ENCODE measurements at regions of chr12 and their contacts with region 1.

Region 1: DNA sequence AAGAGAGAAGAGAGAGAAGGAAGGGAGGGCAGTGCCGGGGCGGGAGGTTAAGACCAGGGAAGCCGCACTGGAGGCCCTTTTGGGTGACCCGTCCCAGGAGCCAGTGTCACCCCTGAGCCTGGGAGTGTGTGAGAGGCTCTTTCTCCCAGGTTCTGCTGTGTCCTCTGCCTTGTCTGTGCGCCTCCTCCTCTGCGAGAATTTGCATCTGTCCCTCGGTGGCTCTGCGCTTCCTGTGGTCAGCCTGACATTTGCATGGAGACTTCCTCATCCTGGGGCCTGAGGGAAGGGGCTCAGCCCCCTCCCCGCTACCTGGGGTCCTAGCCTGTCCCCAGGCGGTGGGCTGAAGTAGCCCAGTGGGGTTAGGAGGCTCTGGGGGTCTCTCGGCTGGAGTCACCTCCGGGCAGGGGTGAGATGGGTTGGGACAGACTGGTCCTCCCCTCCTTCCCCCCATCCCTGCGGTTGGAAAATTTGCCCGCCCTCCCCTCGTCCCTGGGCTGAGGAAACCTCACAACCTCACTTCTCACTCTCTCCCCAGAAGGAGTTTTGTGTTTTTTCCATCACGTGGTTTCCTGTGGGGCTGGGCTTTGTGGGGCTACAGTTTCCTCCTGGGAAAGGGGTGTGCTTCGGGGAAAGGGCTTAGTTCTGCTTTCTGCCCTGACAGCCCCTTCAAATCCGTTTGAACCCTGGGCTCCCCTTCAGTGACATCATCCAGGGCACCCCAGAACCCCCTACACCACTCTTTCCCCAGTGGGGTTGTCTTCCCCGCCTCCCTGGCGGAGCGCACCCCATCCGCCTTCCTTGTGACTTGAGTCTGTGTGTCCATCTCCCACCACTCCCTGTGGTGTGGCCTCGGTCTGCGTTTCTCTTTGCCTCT is 2.5 kb downstream of the PTPN6 start:
- DNase-seq: peak in 8 of 9 donors; percentile 65 to 92 (median 74)
- ATAC-seq: peak; percentile 56
- H3K4me3 ChIP-seq: peak overlapping the region; percentile 92
- H3K4me3 Mint-ChIP-seq: peak overlapping the region; percentile 93 to 100 (median 98)
- H3K27ac ChIP-seq: peak overlapping the region; percentile 95
- H3K27ac Mint-ChIP-seq: peak overlapping the region; percentile 83 to 100 (median 97)
- H3K4me1 ChIP-seq: peaks cover 70 to 84% of the 10 kb centered on the region in 2 donors
- H3K4me1 Mint-ChIP-seq: peaks cover 54 to 85% (median 72%) of the 10 kb centered on the region in 7 donors
- H3K27me3 ChIP-seq: no peaks in the 10 kb centered on the region
- H3K27me3 Mint-ChIP-seq: no peaks in the 10 kb centered on the region

Region 2: GRCh38 chr12:6914246-6914946 is 39.3 kb before region 1 on chr12 and contains the start of gene ENO2:
- CTCF ChIA-PET with region 1: no interaction called
- POLR2A ChIA-PET with region 1: interaction called, 367 read pairs
- intact Hi-C with region 1: loop called in 1 of 2 experiments (anchors 5 kb)
- DNase-seq: peak; percentile 68 to 90 (median 81)
- ATAC-seq: peak; percentile 96
- H3K4me3 ChIP-seq: peak within 1 kb of the TSS; percentile 79
- H3K4me3 Mint-ChIP-seq: peak within 1 kb of the TSS; percentile 88 to 100 (median 96)
- H3K27ac ChIP-seq: peak within 1 kb of the TSS; percentile 86
- H3K27ac Mint-ChIP-seq: peak within 1 kb of the TSS; percentile 86 to 99 (median 93)
- H3K4me1 ChIP-seq: peaks cover 11 to 14% of the 10 kb centered on the region in 2 donors
- H3K4me1 Mint-ChIP-seq: peaks cover 0 to 53% (median 36%) of the 10 kb centered on the region in 7 donors
- H3K27me3 ChIP-seq: no peaks in the 10 kb centered on the region
- H3K27me3 Mint-ChIP-seq: peaks cover 0 to 4% (median 0%) of the 10 kb centered on the region in 5 donors
- total RNA-seq, gene ENO2: 65.3 to 193 (median 178) TPM